Activated naive CD4-positive, alpha-beta T cell treated with anti-CD3 and anti-CD28 coated beads, Interleukin-2, amount 10 ng/mL, durations not matched to agents 7 days and 5 days (primary cell): ENCODE measurements at regions of chr19 and their contacts with region 1.

Region 1: GRCh38 chr19:7562646-7563393 is 27.3 kb downstream of the PNPLA6 start:
- DNase-seq: peak; percentile 48
- H3K4me3 Mint-ChIP-seq: no peak overlapping the region
- H3K27ac Mint-ChIP-seq: no peak overlapping the region
- H3K4me1 Mint-ChIP-seq: no peaks in the 10 kb centered on the region
- H3K27me3 Mint-ChIP-seq: no peaks in the 10 kb centered on the region

Region 2: GRCh38 chr19:7408251-7408650 is 154.6 kb before region 1 on chr19:
- CTCF ChIA-PET with region 1: no interaction called
- DNase-seq: no peak
- H3K4me3 Mint-ChIP-seq: no peak overlapping the region
- H3K27ac Mint-ChIP-seq: no peak overlapping the region
- H3K4me1 Mint-ChIP-seq: peaks cover 12% of the 10 kb centered on the region
- H3K27me3 Mint-ChIP-seq: no peaks in the 10 kb centered on the region

Region 3: GRCh38 chr19:7515645-7516151 is 47.1 kb before region 1 on chr19 and contains the start of gene ZNF358:
- CTCF ChIA-PET with region 1: no interaction called
- DNase-seq: peak; percentile 61
- H3K4me3 Mint-ChIP-seq: peak within 1 kb of the TSS; percentile 72
- H3K27ac Mint-ChIP-seq: no peak within 1 kb of the TSS
- H3K4me1 Mint-ChIP-seq: peaks cover 12% of the 10 kb centered on the region
- H3K27me3 Mint-ChIP-seq: peaks cover 49% of the 10 kb centered on the region

Region 4: GRCh38 chr19:7527516-7528191 is 35.2 kb before region 1 on chr19:
- CTCF ChIA-PET with region 1: no interaction called
- DNase-seq: no peak
- H3K4me3 Mint-ChIP-seq: no peak overlapping the region
- H3K27ac Mint-ChIP-seq: no peak overlapping the region
- H3K4me1 Mint-ChIP-seq: peaks cover 5% of the 10 kb centered on the region
- H3K27me3 Mint-ChIP-seq: no peaks in the 10 kb centered on the region

Region 5: DNA sequence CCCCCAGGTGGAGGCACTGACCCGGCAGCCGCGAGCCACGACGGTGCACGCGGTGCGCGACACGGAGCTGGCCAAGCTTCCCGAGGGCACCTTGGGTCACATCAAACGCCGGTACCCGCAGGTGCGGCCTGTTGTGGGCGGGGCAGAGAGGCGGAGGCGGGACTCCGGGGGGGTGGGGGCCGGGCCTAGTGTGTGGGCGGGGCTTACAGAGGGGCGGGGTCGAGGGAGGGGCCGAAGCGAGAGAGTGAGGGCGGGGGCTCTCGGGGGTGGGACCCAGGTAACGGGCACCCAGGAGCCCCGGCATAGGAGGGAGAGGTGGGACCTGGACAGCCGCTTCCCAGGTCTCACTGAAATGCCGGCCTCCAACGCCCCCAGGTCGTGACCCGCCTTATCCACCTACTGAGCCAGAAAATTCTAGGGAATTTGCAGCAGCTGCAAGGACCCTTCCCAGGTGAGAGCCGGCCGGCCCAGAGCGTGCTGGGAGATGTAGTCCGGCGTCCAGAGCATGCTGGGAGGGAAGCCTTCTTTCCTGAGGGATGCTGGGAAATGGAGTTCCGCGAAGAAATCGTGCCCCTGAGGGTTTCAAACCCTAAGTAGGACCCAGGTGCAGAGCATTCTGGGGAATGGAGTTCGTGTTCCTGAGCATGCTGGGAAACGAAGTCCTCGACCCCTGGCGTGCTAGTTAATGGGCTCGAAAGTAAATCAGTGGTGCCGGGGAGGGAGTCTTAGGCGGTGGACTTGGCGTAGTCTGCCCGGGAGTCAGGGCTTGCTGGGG is 11.6 kb before region 1 on chr19:
- CTCF ChIA-PET with region 1: interaction called, 12 read pairs
- DNase-seq: peak; percentile 39
- H3K4me3 Mint-ChIP-seq: no peak overlapping the region
- H3K27ac Mint-ChIP-seq: no peak overlapping the region
- H3K4me1 Mint-ChIP-seq: peaks cover 22% of the 10 kb centered on the region
- H3K27me3 Mint-ChIP-seq: no peaks in the 10 kb centered on the region

Region 6: DNA sequence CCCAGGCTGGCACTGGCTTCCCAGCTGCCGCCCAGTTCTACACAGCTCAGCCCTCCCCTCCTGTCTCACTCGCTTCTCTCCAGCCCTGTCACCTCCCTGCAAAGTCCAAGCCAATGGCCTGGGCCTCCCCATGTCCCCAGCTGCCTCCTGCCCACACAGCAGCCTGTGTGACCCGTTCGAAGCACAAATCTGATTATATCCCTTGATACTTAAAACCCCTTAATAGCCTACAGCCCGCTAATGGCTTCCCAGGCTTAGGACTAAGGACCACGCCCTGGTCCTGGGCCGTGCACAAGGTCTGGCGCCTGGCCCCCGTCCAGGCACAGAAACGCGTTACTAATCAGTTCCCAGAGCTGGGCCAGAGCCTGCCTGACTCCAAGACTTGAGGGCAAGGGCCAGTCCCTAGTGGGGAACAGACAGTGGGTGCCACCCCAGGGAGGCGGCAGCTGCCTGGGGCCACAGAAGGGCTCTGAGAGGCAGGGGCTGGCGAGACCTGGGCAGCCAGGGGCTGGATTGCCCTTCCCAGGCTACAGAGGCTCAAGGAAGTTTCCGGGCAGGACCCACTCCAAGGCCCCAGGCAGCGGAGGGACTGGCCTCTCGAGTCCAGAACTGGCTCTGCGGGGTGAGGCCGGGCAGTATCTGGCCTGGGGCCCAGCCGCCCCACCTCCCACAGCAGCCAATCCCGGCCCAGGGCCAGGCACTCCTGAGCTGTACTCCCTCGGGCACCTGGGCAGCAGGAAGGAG is 56.1 kb after region 1 on chr19:
- CTCF ChIA-PET with region 1: no interaction called
- DNase-seq: no peak
- H3K4me3 Mint-ChIP-seq: no peak overlapping the region
- H3K27ac Mint-ChIP-seq: no peak overlapping the region
- H3K4me1 Mint-ChIP-seq: no peaks in the 10 kb centered on the region
- H3K27me3 Mint-ChIP-seq: no peaks in the 10 kb centered on the region

Region 7: GRCh38 chr19:7799640-7800355 is 237.0 kb after region 1 on chr19:
- CTCF ChIA-PET with region 1: interaction called, 33 read pairs
- DNase-seq: peak; percentile 70
- H3K4me3 Mint-ChIP-seq: no peak overlapping the region
- H3K27ac Mint-ChIP-seq: no peak overlapping the region
- H3K4me1 Mint-ChIP-seq: peaks cover 5% of the 10 kb centered on the region
- H3K27me3 Mint-ChIP-seq: peaks cover 42% of the 10 kb centered on the region